GM12878 (cell line): ENCODE measurements at regions of chr7 and their contacts with region 1.

Region 1: DNA sequence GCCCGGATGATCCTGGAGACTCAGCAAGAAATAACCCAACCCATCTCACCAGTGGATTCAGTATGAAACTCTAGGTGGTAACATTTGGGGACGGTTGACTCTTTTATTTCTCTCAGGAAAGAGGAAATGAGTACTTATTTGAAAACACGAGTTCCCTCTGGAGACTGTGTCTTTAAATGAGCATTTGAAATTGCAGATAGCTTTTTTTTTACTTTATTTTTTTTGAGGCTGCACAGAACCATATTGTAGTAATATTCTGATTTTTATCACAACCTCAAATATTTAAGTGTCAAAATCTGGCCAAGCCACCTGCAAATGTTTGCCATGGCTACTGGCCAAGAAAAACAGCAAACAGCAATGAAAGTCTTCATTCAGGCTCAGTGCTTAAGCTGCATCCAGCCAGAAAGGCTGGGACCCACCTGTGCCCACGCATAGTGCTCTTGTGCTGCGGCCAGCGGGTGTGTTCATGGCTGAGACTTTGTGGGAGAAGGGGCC is 160.8 kb downstream of the CREB5 start:
- DNase-seq: no peak
- ATAC-seq: peak; percentile 40
- H3K4me3 ChIP-seq: no peak overlapping the region
- H3K27ac ChIP-seq: peak overlapping the region; percentile 29
- H3K4me1 ChIP-seq: peaks cover 23% of the 10 kb centered on the region
- H3K27me3 ChIP-seq: no peaks in the 10 kb centered on the region
- CTCF ChIP-seq: no peak
- EP300 ChIP-seq: peak in 1 of 2 experiments; percentile 9; a peak in 2 of 4 replicates
- POLR2A ChIP-seq: no peak; the same call in 1 of the 2 replicates
- RAD21 ChIP-seq: no peak

Region 2: GRCh38 chr7:28123752-28124151 is 449.4 kb before region 1 on chr7:
- CTCF ChIA-PET with region 1: no interaction called
- POLR2A ChIA-PET with region 1: no interaction called
- RAD21 ChIA-PET with region 1: no interaction called
- SMC1A ChIA-PET with region 1: no interaction called
- in situ Hi-C with region 1: no loop called
- intact Hi-C with region 1: no loop called
- DNase-seq: no peak
- ATAC-seq: no peak
- H3K4me3 ChIP-seq: no peak overlapping the region
- H3K27ac ChIP-seq: no peak overlapping the region
- H3K4me1 ChIP-seq: no peaks in the 10 kb centered on the region
- H3K27me3 ChIP-seq: no peaks in the 10 kb centered on the region; a peak in 4 of 4 replicates
- CTCF ChIP-seq: no peak
- EP300 ChIP-seq: no peak
- POLR2A ChIP-seq: no peak
- RAD21 ChIP-seq: no peak

Region 3: DNA sequence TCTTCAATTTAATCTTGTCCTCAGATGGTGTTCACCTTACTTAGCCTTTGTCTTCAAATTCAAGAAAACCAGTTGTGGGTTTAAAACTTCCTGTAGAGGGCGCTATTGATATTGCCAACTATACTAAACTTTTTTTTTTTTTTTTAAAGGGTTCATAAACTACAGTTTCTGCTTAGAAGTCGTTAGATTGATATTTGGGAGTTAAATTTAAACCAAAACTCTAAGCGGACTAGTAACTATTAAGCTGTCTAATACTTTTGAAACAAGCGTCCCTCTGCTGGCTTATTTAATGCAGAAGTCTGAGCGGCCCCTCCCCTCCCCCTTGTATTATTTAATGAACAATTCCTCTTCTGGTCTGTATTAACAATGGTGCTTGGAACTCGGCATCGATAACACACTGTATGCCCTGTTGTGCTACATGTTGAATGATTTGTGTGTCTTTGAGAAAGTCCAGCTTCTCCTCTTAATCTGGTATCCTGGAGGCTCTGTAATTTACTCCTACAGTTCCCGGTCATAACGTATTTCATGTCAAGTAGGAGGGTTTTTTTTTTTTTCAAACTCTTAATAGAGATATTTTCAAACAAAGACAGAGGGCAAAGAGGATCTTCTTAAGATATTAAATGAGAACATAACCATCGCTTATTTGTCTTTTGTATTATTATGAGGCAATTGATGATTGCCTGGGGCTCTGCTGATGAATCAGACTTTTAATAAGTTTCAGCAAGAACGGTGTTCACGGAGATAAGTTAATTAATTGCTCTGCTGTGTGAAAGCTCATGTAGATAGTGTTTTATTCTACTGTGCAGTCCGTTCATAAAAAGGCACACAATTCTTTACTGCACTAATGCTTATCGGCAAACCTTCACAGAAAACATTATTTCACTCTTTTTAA is 183.4 kb before region 1 on chr7:
- CTCF ChIA-PET with region 1: interaction called, 13 read pairs
- POLR2A ChIA-PET with region 1: no interaction called
- RAD21 ChIA-PET with region 1: interaction called, 6 read pairs
- SMC1A ChIA-PET with region 1: interaction called, 4 read pairs
- in situ Hi-C with region 1: no loop called
- intact Hi-C with region 1: loop called (anchors 2 kb)
- DNase-seq: no peak
- ATAC-seq: peak; percentile 64
- H3K4me3 ChIP-seq: no peak overlapping the region
- H3K27ac ChIP-seq: no peak overlapping the region
- H3K4me1 ChIP-seq: no peaks in the 10 kb centered on the region
- H3K27me3 ChIP-seq: no peaks in the 10 kb centered on the region
- CTCF ChIP-seq: peak; percentile 56 to 71 (median 61)
- EP300 ChIP-seq: no peak
- POLR2A ChIP-seq: no peak
- RAD21 ChIP-seq: peak; percentile 86

Region 4: DNA sequence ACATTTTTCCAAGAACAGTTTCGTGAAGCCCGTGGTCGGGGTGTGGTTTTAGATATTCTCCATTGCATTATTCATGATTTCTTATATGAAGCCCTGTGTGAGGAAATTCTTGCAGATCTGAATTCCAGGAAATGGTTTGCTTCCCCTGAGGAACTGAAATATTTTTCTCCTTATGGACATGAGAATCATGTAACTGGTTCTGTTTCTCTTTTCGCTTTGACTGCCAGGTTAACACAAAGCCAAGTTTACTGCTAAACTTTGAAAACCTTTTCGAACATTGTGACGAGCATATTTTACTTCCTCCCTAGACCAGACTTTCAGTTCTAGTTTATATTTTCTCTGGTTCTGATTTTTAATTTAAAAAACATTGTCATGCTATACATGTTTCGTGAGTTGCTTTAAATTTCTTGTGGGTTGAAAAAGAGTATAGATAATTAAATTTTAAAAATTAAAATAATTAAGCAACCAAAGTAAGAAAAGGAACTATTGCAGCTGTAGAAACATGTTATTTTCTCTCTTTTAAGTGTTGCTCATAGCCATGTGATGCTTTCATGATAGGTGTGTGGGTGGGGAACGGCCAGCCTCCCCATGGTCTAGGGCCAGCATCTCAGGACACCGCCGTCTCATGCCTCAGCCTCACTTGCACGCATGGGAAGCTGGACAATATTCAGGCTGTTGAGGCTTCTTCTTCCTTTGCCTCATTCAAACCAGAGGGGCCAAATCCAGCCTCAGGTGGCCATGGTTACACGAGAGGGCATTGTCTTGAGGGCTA is 63.7 kb before region 1 on chr7:
- CTCF ChIA-PET with region 1: interaction called, 7 read pairs
- POLR2A ChIA-PET with region 1: interaction called, 3 read pairs
- RAD21 ChIA-PET with region 1: interaction called, 46 read pairs
- SMC1A ChIA-PET with region 1: interaction called, 11 read pairs
- in situ Hi-C with region 1: no loop called
- intact Hi-C with region 1: loop called (anchors 1 kb)
- DNase-seq: peak; percentile 45
- ATAC-seq: peak; percentile 95
- H3K4me3 ChIP-seq: peak overlapping the region; percentile 14; the same call in 1 of the 2 replicates
- H3K27ac ChIP-seq: peak overlapping the region; percentile 70
- H3K4me1 ChIP-seq: peaks cover 17% of the 10 kb centered on the region
- H3K27me3 ChIP-seq: no peaks in the 10 kb centered on the region
- CTCF ChIP-seq: no peak
- EP300 ChIP-seq: peak; percentile 65 to 74
- POLR2A ChIP-seq: peak; percentile 43; the same call in 1 of the 2 replicates
- RAD21 ChIP-seq: peak; percentile 24; the same call in 1 of the 2 replicates

Region 5: GRCh38 chr7:28536259-28536658 is 36.8 kb before region 1 on chr7:
- CTCF ChIA-PET with region 1: interaction called, 13 read pairs
- POLR2A ChIA-PET with region 1: interaction called, 43 read pairs
- RAD21 ChIA-PET with region 1: interaction called, 104 read pairs
- SMC1A ChIA-PET with region 1: interaction called, 118 read pairs
- in situ Hi-C with region 1: no loop called
- intact Hi-C with region 1: loop called (anchors 1 kb)
- DNase-seq: no peak
- ATAC-seq: no peak
- H3K4me3 ChIP-seq: no peak overlapping the region
- H3K27ac ChIP-seq: no peak overlapping the region
- H3K4me1 ChIP-seq: peaks cover 17% of the 10 kb centered on the region
- H3K27me3 ChIP-seq: no peaks in the 10 kb centered on the region
- CTCF ChIP-seq: no peak; a peak in 1 of 6 replicates
- EP300 ChIP-seq: no peak
- POLR2A ChIP-seq: no peak
- RAD21 ChIP-seq: no peak

Region 6: DNA sequence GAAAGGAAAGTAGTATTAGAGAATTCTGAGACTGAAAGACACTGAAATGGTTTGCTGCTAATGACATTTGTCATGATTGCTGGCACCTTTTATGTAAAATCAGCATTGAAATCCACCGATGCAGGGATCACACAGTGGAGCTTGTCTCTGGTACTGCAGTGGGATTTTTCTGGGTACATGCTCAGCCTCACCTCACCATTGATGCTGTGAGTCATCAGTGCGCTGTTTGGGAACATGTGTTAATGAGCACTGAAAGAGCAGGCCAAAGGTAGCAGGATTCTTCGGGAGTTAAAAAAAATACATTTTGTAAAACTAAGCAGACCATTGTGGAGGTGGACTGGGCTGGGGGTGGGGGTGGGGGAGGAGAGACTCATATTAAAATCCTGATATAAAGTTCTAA is 14.1 kb after region 1 on chr7:
- CTCF ChIA-PET with region 1: interaction called, 4 read pairs
- POLR2A ChIA-PET with region 1: interaction called, 5 read pairs
- RAD21 ChIA-PET with region 1: interaction called, 17 read pairs
- SMC1A ChIA-PET with region 1: interaction called, 20 read pairs
- in situ Hi-C with region 1: no loop called
- intact Hi-C with region 1: no loop called
- DNase-seq: no peak
- ATAC-seq: peak; percentile 27; the same call in 1 of the 3 replicates
- H3K4me3 ChIP-seq: no peak overlapping the region
- H3K27ac ChIP-seq: no peak overlapping the region
- H3K4me1 ChIP-seq: no peaks in the 10 kb centered on the region
- H3K27me3 ChIP-seq: no peaks in the 10 kb centered on the region
- CTCF ChIP-seq: no peak
- EP300 ChIP-seq: no peak
- POLR2A ChIP-seq: no peak
- RAD21 ChIP-seq: no peak

Region 7: GRCh38 chr7:28608731-28609130 is 35.6 kb after region 1 on chr7:
- CTCF ChIA-PET with region 1: interaction called, 5 read pairs
- POLR2A ChIA-PET with region 1: interaction called, 20 read pairs
- RAD21 ChIA-PET with region 1: interaction called, 130 read pairs
- SMC1A ChIA-PET with region 1: interaction called, 151 read pairs
- in situ Hi-C with region 1: no loop called
- intact Hi-C with region 1: no loop called
- DNase-seq: no peak
- ATAC-seq: no peak
- H3K4me3 ChIP-seq: no peak overlapping the region
- H3K27ac ChIP-seq: no peak overlapping the region
- H3K4me1 ChIP-seq: no peaks in the 10 kb centered on the region; the same call in 1 of the 2 replicates
- H3K27me3 ChIP-seq: no peaks in the 10 kb centered on the region; a peak in 1 of 4 replicates
- CTCF ChIP-seq: no peak
- EP300 ChIP-seq: no peak
- POLR2A ChIP-seq: no peak
- RAD21 ChIP-seq: no peak

Region 8: GRCh38 chr7:28621369-28621841 is 48.3 kb after region 1 on chr7:
- CTCF ChIA-PET with region 1: interaction called, 22 read pairs
- POLR2A ChIA-PET with region 1: interaction called, 28 read pairs
- RAD21 ChIA-PET with region 1: interaction called, 130 read pairs
- SMC1A ChIA-PET with region 1: interaction called, 151 read pairs
- in situ Hi-C with region 1: no loop called
- intact Hi-C with region 1: loop called (anchors 1 kb)
- DNase-seq: peak; percentile 45
- ATAC-seq: peak; percentile 82
- H3K4me3 ChIP-seq: no peak overlapping the region
- H3K27ac ChIP-seq: peak overlapping the region; percentile 45; the same call in 1 of the 2 replicates
- H3K4me1 ChIP-seq: peaks cover 3% of the 10 kb centered on the region; the same call in 1 of the 2 replicates
- H3K27me3 ChIP-seq: no peaks in the 10 kb centered on the region
- CTCF ChIP-seq: no peak
- EP300 ChIP-seq: peak; percentile 76 to 90; a peak in 3 of 4 replicates
- POLR2A ChIP-seq: no peak
- RAD21 ChIP-seq: 0 out of 2 replicates have a peak, but pooled peaks have one; percentile 19